ENCODE measurements at regions of chr4 and their contacts with region 1.

Region 1: DNA sequence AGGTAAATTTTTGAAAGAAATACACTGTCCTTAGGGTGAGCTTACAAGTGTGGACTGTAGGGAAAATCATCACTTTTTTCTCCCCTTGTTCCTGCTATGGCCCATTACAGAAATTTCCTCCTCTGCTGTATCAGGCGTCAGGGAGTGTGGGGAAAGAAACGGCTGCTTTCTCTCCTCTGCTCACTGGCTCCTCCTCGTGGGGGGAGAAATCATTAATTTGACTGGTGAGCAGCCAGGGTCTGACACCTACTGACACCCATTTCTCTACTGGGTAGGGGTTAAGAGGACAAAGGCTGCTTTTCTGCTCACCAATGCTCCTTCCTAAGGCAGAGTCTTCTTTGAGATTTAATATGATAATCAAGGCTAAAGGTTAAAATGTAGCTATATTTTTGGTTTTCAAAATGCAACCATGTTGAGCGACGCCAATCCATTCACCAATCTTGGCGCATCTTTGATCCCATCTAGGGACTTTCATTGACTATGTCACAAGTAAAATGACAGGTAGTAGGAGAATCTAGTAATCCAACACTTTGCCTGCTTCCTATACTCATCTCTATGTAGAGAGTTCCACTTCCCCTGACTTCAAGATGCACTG is 25.1 kb downstream of the SETD7 start:
- DNase-seq: peak; percentile 41 to 62 (median 57)
- H3K4me3 ChIP-seq: no peak overlapping the region
- H3K4me3 Mint-ChIP-seq: peak overlapping the region in 1 of 8 donors; percentile 27
- H3K27ac ChIP-seq: no peak overlapping the region
- H3K27ac Mint-ChIP-seq: peak overlapping the region in 4 of 7 donors; percentile 24 to 81 (median 61)
- H3K4me1 ChIP-seq: peaks cover 8% of the 10 kb centered on the region
- H3K4me1 Mint-ChIP-seq: peaks cover 8 to 17% (median 14%) of the 10 kb centered on the region in 4 donors
- H3K27me3 ChIP-seq: no peaks in the 10 kb centered on the region
- H3K27me3 Mint-ChIP-seq: no peaks in the 10 kb centered on the region

Region 2: DNA sequence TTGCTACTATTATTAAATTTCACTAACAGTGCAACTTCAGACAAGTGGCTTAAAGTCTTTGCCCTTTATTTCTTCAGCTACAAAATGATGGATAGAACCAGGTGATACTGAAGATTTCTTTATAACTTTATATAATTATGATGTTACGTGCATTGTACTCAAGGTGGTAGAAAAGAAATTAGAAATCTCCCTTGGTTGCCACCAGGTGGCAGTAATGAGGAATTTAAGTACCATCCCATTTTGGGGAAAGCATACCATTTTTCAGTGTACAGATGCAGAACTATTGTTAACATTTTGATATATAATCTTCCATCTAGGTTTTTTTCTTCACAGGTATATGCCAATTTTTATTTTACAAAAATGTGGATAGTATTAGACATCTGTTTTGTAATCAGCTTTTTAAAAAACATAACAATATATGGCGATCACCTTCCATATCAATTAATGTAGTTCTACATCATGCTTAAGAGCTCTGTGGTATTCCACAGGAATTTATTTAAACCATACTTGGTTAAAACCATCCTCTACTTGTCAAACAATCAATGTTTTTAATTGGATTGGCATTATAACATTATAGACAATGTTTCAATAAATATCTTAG is 114.8 kb before region 1 on chr4:
- CTCF ChIA-PET with region 1: interaction called, 5 read pairs
- POLR2A ChIA-PET with region 1: no interaction called
- intact Hi-C with region 1: loop called (anchors 1 kb)
- DNase-seq: peak in 4 of 5 donors; percentile 28 to 47 (median 42)
- H3K4me3 ChIP-seq: no peak overlapping the region
- H3K4me3 Mint-ChIP-seq: no peak overlapping the region
- H3K27ac ChIP-seq: no peak overlapping the region
- H3K27ac Mint-ChIP-seq: no peak overlapping the region
- H3K4me1 ChIP-seq: no peaks in the 10 kb centered on the region
- H3K4me1 Mint-ChIP-seq: peaks cover 4 to 17% (median 5%) of the 10 kb centered on the region in 4 donors
- H3K27me3 ChIP-seq: no peaks in the 10 kb centered on the region
- H3K27me3 Mint-ChIP-seq: no peaks in the 10 kb centered on the region